Activated naive CD4-positive, alpha-beta T cell treated with anti-CD3 and anti-CD28 coated beads for 36 hours (primary cell): ENCODE measurements at regions of chr12 and their contacts with region 1.

Region 1: DNA sequence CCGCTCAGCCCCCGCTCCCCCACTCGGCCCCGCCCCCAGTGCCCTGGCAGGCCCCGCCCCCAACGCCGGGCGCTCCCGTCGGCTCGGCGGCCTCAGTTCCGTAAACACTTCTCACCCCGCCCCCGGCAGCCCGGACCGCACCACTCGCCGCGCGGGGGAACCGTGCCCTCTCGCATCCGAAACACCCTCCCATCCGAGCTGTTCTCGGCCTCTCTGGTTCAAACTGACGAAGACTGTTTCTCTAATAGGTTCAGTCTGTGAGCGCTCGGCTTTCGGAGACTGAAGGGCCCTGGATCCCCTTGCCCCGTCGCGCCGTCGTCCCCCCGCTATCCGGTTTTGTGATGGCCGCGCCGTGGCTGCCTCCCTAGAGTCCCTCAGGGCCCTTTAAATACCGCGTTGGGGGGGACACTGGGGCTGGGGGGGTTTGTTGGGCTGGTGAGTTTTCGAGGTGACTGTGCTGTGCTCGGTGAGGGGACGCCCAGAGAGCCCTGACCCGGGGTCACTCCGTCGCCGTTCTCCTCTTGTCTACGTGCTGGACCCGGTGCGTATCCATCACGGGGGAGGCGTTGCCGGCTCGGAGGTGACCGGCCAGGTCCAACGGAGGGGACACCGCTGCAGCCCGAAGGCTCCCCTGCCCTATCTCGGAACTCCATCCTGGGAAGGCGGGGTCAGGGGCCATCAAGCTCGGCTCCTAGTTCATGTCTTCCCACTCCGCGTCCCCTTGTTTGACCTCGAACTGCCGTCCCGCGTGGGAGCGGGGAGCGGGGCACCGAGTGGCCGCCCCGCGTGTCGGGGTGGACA is at the start of gene TCP11L2:
- DNase-seq: peak; percentile 88
- H3K4me3 Mint-ChIP-seq: peak within 1 kb of the TSS; percentile 93
- H3K27ac Mint-ChIP-seq: peak within 1 kb of the TSS; percentile 99
- H3K4me1 Mint-ChIP-seq: peaks cover 55% of the 10 kb centered on the region
- H3K27me3 Mint-ChIP-seq: no peaks in the 10 kb centered on the region
- total RNA-seq, gene TCP11L2: 9.2 to 10.3 TPM

Region 2: GRCh38 chr12:105330283-105330930 is 972.2 kb before region 1 on chr12 and contains the start of gene C12orf75:
- CTCF ChIA-PET with region 1: no interaction called
- intact Hi-C with region 1: loop called (anchors 5 kb)
- DNase-seq: peak; percentile 86
- H3K4me3 Mint-ChIP-seq: peak within 1 kb of the TSS; percentile 76
- H3K27ac Mint-ChIP-seq: peak within 1 kb of the TSS; percentile 14
- H3K4me1 Mint-ChIP-seq: peaks cover 35% of the 10 kb centered on the region
- H3K27me3 Mint-ChIP-seq: no peaks in the 10 kb centered on the region
- total RNA-seq, gene C12orf75: 41.1 to 48.5 TPM

Region 3: GRCh38 chr12:106288494-106289195 is 14.0 kb before region 1 on chr12:
- CTCF ChIA-PET with region 1: interaction called, 4 read pairs
- intact Hi-C with region 1: loop called (anchors 1 kb)
- DNase-seq: peak; percentile 72
- H3K4me3 Mint-ChIP-seq: no peak overlapping the region
- H3K27ac Mint-ChIP-seq: peak overlapping the region; percentile 87
- H3K4me1 Mint-ChIP-seq: peaks cover 29% of the 10 kb centered on the region
- H3K27me3 Mint-ChIP-seq: peaks cover 4% of the 10 kb centered on the region

Region 4: GRCh38 chr12:106357549-106358395 is 55.2 kb after region 1 on chr12 and contains the start of gene POLR3B:
- CTCF ChIA-PET with region 1: interaction called, 7 read pairs
- intact Hi-C with region 1: loop called (anchors 1 kb)
- DNase-seq: peak; percentile 97
- H3K4me3 Mint-ChIP-seq: peak within 1 kb of the TSS; percentile 92
- H3K27ac Mint-ChIP-seq: peak within 1 kb of the TSS; percentile 89
- H3K4me1 Mint-ChIP-seq: peaks cover 11% of the 10 kb centered on the region
- H3K27me3 Mint-ChIP-seq: no peaks in the 10 kb centered on the region
- total RNA-seq, gene POLR3B: 6.4 to 6.8 TPM

Region 5: DNA sequence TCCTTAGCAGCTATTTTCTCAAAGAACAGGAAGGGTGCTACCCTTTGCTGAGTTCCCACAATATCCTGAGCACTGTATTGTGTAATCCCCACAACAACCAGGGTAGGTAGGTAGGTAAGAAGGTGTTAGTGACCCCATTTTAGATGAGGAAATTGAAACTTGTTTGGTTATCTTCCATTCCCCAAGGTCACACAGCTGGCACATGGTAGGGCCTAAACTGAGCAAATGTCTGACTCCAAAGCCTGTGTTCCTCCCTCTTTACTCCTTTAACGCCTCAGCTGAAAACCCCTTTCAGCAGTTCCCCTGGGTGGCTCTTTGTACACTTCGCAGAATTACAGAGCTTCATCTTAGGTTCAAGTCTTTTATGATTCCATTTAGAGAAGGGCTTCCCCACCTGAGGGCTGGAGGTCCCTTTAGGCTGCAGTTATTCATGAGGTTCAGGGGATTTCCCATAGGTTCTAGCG is 445.4 kb after region 1 on chr12:
- CTCF ChIA-PET with region 1: no interaction called
- intact Hi-C with region 1: loop called (anchors 5 kb)
- DNase-seq: peak; percentile 63
- H3K4me3 Mint-ChIP-seq: peak overlapping the region; percentile 12
- H3K27ac Mint-ChIP-seq: peak overlapping the region; percentile 90
- H3K4me1 Mint-ChIP-seq: peaks cover 32% of the 10 kb centered on the region
- H3K27me3 Mint-ChIP-seq: no peaks in the 10 kb centered on the region